Thyroid gland (tissue), 4 donors: ENCODE measurements at regions of chr3 and their contacts with region 1.

Region 1: DNA sequence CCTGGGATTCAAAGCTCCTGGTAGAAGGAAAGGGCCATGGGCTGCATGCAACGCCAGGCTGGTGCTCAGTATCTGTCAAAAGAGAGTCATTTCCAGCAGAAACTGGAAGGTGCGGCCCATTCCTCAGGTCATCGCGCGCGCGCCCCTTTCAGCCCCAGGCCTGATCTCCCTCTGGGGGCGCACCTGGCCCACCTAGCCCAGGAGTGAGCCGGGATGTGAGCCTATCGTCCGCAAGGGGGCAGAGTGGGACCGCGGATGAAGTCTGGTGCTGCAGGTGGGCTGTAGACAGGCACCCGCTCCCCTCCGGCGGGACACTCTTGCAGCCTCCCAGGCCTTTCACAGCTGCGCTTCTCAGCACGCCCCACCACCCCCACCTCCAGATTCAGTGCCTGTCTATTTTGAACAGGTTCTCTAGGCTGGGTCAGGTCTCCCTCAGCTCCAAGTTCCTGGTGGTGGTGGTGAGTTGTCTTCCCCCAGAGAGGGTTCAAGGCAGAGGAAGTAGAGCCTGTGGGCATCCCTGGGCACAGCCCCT is 5.8 kb upstream of the RPL29 start:
- DNase-seq: peak; percentile 74
- H3K4me3 ChIP-seq: no peak overlapping the region
- H3K27ac ChIP-seq: no peak overlapping the region
- H3K4me1 ChIP-seq: peaks cover 6 to 22% of the 10 kb centered on the region in 2 donors
- H3K27me3 ChIP-seq: no peaks in the 10 kb centered on the region
- CTCF ChIP-seq: peak; percentile 57 to 95 (median 92)
- POLR2A ChIP-seq: no peak

Region 2: GRCh38 chr3:52062499-52062898 is 61.0 kb after region 1 on chr3:
- intact Hi-C with region 1: loop called (anchors 5 kb)
- DNase-seq: no peak
- H3K4me3 ChIP-seq: no peak overlapping the region
- H3K27ac ChIP-seq: no peak overlapping the region
- H3K4me1 ChIP-seq: peaks cover 0 to 6% of the 10 kb centered on the region in 2 donors
- H3K27me3 ChIP-seq: no peaks in the 10 kb centered on the region
- CTCF ChIP-seq: no peak
- POLR2A ChIP-seq: no peak

Region 3: DNA sequence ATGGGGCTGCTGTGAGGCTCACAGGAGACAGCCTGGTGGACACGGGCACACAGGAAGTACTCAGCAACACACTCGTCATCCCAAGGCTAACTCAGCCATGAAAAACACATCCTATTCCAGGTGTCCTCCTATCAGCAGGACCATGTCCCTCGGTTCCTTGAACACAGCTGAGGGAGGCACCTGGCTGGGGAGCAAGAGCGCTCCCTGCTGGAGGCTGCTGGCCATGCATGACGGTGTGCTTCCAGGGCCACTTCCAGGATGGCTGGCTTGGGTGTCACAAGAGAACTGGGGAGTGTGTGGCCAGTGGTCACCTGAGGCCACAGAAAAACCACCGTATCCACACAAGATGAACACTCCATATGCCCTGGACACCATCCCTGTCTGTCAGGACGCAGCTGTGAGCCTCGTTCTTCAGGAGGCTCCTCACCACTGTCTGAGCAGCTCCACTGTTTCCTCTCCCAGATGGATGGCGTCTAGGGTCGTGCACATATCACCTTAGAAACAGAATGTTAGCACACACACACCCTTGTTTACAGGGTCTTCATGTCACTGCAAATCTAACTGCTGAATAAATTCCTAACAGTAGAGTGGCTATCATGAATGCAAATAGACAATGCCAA is 121.7 kb after region 1 on chr3:
- intact Hi-C with region 1: loop called (anchors 2 kb)
- DNase-seq: peak; percentile 74 to 77
- H3K4me3 ChIP-seq: no peak overlapping the region
- H3K27ac ChIP-seq: no peak overlapping the region
- H3K4me1 ChIP-seq: peaks cover 0 to 25% of the 10 kb centered on the region in 2 donors
- H3K27me3 ChIP-seq: no peaks in the 10 kb centered on the region
- CTCF ChIP-seq: peak; percentile 77 to 94 (median 93)
- POLR2A ChIP-seq: no peak

Region 4: GRCh38 chr3:52144034-52144795 is 142.7 kb after region 1 on chr3:
- intact Hi-C with region 1: loop called (anchors 2 kb)
- DNase-seq: peak; percentile 87 to 91
- H3K4me3 ChIP-seq: no peak overlapping the region
- H3K27ac ChIP-seq: no peak overlapping the region
- H3K4me1 ChIP-seq: no peaks in the 10 kb centered on the region
- H3K27me3 ChIP-seq: no peaks in the 10 kb centered on the region
- CTCF ChIP-seq: peak; percentile 87 to 99 (median 96)
- POLR2A ChIP-seq: no peak

Region 5: DNA sequence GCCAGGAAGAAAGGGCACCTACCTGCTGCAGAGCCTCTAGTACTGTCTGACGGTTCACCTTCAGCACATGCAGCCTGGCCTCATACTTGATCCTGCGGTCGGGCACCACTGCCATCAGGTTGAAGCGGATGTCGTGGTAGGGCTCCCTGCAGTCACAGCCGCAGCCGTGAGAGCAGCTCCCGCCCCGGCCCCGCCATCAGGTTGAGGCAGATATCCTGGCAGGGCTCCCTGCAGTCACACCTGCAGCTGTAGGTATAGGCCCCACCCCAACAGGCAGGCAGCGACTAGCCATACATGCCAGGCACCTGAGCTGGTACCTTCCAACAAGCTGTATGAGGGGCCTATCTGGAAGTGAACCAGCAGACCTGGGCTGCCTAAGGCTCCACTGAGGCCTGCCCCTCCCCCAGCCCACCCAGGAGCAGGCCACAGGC is 404.7 kb after region 1 on chr3:
- intact Hi-C with region 1: no loop called
- DNase-seq: no peak
- H3K4me3 ChIP-seq: no peak overlapping the region
- H3K27ac ChIP-seq: no peak overlapping the region
- H3K4me1 ChIP-seq: peaks cover 12 to 17% of the 10 kb centered on the region in 2 donors
- H3K27me3 ChIP-seq: no peaks in the 10 kb centered on the region
- CTCF ChIP-seq: no peak
- POLR2A ChIP-seq: no peak